Breast epithelium (tissue), 4 donors: ENCODE measurements at regions of chr6 and their contacts with region 1.

Region 1: GRCh38 chr6:125570526-125570925 is 178.9 kb upstream of the HEY2 start:
- DNase-seq: no peak
- H3K4me3 ChIP-seq: no peak overlapping the region
- H3K27ac ChIP-seq: no peak overlapping the region
- H3K4me1 ChIP-seq: no peaks in the 10 kb centered on the region
- H3K27me3 ChIP-seq: no peaks in the 10 kb centered on the region
- CTCF ChIP-seq: no peak
- POLR2A ChIP-seq: no peak

Region 2: GRCh38 chr6:124927806-124928205 is 642.7 kb before region 1 on chr6:
- intact Hi-C with region 1: loop called (anchors 5 kb)
- DNase-seq: no peak
- H3K4me3 ChIP-seq: no peak overlapping the region
- H3K27ac ChIP-seq: no peak overlapping the region
- H3K4me1 ChIP-seq: no peaks in the 10 kb centered on the region
- H3K27me3 ChIP-seq: no peaks in the 10 kb centered on the region
- CTCF ChIP-seq: no peak
- POLR2A ChIP-seq: no peak

Region 3: DNA sequence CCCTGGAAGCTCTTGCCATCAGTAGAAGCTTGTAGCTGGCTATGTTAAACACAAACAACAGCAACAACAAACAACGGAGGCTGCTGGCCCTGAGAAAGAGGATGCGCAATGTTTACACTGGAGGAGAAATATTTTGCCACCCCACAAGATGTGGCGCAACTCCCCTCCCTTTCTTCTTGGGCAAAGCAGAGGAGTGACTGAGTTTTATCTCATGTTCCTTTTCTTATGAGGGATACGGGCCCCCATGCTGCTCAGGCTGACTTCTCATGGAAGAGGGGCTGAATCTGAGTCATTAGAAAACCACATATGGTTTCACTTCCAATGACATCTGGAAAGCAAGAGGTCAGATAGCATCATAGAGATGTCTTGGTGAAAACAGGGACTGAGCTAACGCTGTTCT is 192.9 kb before region 1 on chr6:
- intact Hi-C with region 1: no loop called
- DNase-seq: no peak
- H3K4me3 ChIP-seq: no peak overlapping the region
- H3K27ac ChIP-seq: peak overlapping the region; percentile 56 to 80
- H3K4me1 ChIP-seq: no peaks in the 10 kb centered on the region
- H3K27me3 ChIP-seq: no peaks in the 10 kb centered on the region
- CTCF ChIP-seq: no peak
- POLR2A ChIP-seq: no peak